ENCODE measurements at regions of chr19 and their contacts with region 1.

Region 1: DNA sequence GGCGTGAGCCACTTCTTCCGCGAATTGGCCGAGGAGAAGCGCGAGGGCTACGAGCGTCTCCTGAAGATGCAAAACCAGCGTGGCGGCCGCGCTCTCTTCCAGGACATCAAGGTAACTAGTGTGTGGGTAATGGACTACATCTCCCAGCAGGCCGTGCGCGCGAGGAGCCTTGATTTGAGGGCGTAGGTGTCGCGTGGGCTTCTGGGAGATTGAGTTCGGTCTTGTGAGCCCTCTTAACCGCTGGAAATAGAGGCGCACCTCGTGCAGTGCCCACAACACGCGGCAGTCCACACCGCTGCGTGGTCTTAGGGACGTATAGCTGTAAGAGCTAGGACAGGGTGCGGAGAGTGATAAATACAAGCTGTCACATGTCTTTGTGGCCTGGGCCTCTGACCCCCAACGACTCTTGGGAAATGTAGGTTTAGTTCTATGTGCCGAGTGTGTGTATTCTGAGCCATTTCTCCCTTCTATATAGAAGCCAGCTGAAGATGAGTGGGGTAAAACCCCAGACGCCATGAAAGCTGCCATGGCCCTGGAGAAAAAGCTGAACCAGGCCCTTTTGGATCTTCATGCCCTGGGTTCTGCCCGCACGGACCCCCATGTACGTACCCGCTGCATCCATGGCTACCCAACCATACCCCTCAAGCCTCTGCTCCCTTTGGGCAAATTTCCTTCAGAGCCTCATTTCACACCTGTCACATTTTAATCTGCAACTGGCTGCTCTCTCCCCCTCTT is 864 bp downstream of the FTL start:
- DNase-seq: peak; percentile 91
- ATAC-seq: peak; percentile 16
- H3K4me3 Mint-ChIP-seq: peak overlapping the region; percentile 99
- H3K27ac Mint-ChIP-seq: peak overlapping the region; percentile 93
- H3K4me1 Mint-ChIP-seq: peaks cover 37% of the 10 kb centered on the region
- H3K27me3 Mint-ChIP-seq: no peaks in the 10 kb centered on the region
- CTCF ChIP-seq: no peak

Region 2: DNA sequence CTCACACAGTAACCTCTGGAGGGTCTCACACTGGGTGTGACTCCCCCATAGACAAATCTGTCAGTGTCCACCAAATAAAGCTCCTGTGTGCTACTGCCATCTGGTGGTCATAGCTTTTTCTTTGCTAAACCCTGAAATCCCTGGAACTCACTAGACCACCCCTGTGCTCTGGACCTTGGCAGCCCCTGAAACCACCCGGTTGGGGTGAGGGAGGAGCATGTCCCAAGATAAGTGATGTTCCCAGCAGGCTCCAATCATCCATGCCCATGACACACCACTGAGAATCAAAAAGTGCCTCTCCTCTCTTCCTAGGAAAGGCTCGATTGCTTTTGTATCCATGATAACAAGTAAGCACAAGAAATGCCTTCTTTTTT is 123.2 kb before region 1 on chr19:
- CTCF ChIA-PET with region 1: interaction called, 19 read pairs
- POLR2A ChIA-PET with region 1: interaction called, 5 read pairs
- DNase-seq: peak; percentile 71
- ATAC-seq: peak; percentile 87
- H3K4me3 Mint-ChIP-seq: no peak overlapping the region
- H3K27ac Mint-ChIP-seq: no peak overlapping the region
- H3K4me1 Mint-ChIP-seq: peaks cover 6% of the 10 kb centered on the region
- H3K27me3 Mint-ChIP-seq: no peaks in the 10 kb centered on the region; the same call in 1 of the 2 replicates
- CTCF ChIP-seq: peak; percentile 70

Region 3: DNA sequence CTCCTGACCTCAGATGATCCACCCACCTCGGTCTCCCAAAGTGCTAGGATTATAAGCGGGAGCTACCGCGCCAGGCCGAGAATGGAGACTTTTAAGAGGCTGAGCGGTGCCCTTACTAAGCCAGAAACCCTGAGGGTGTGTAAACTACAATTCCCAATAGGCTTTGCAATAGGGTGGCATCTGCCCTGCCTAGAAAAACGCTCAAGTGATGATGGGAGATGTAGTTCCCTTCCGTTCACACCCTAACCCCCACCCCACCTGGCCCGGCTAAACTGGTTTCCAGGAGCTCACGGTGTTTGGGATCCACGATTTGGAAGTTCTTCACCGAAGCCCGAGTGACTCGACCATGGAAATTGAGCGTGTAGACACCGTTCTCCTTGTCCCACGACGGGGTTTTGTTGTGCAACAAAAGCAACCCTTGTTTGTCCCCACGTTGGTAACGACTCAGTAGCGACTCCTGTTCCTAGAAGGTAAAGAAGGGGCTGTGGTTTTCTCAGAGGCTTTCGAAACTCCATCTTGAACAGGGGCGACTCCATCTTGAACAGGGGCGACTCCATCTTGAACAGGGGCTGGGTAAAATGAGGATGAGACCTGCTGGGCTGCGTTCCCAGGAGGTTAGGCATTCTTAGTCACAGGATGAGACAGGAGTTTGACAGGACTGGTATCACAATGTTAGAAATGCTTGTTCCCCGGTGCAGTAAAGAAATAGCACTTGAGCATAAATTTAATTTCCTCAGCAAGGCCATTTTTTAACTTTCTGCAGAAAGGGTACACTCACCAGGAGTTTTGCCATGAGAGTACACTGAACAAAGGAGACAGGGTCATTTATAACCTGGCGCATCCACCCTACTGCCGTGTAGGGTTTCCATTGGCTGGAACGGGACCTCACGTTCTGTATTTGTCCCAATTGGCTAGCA is 84.0 kb before region 1 on chr19:
- CTCF ChIA-PET with region 1: interaction called, 21 read pairs
- POLR2A ChIA-PET with region 1: interaction called, 3 read pairs
- DNase-seq: peak; percentile 73
- ATAC-seq: peak; percentile 89
- H3K4me3 Mint-ChIP-seq: no peak overlapping the region
- H3K27ac Mint-ChIP-seq: no peak overlapping the region; the same call in 1 of the 2 replicates
- H3K4me1 Mint-ChIP-seq: peaks cover 19% of the 10 kb centered on the region
- H3K27me3 Mint-ChIP-seq: no peaks in the 10 kb centered on the region
- CTCF ChIP-seq: no peak

Region 4: DNA sequence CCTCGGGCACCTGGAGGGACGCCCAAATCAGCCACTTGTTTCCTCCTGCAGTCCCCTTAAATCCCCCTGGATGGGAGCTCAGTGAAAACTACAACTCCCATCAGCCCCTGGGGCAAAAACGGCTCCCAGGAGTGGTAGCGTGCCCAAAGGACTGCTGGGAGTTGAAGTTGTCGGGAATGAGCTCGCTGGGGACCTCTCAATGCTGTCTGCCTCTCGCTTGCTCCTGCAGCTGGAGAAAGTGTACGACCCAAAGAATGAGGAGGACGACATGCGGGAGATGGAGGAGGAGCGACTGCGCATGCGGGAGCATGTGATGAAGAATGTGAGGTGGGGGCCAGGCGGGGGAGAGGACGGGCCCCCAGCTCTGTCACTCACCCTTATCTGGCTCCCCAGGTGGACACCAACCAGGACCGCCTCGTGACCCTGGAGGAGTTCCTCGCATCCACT is 47.1 kb before region 1 on chr19:
- CTCF ChIA-PET with region 1: interaction called, 20 read pairs
- POLR2A ChIA-PET with region 1: no interaction called
- DNase-seq: peak; percentile 81
- ATAC-seq: peak; percentile 97
- H3K4me3 Mint-ChIP-seq: no peak overlapping the region
- H3K27ac Mint-ChIP-seq: 0 out of 2 replicates have a peak overlapping the region, but pooled peaks have one; percentile 76
- H3K4me1 Mint-ChIP-seq: no peaks in the 10 kb centered on the region
- H3K27me3 Mint-ChIP-seq: no peaks in the 10 kb centered on the region
- CTCF ChIP-seq: no peak

Region 5: GRCh38 chr19:48943081-48943480 is 22.9 kb before region 1 on chr19:
- CTCF ChIA-PET with region 1: interaction called, 10 read pairs
- POLR2A ChIA-PET with region 1: no interaction called
- DNase-seq: no peak
- ATAC-seq: no peak
- H3K4me3 Mint-ChIP-seq: no peak overlapping the region
- H3K27ac Mint-ChIP-seq: no peak overlapping the region
- H3K4me1 Mint-ChIP-seq: no peaks in the 10 kb centered on the region
- H3K27me3 Mint-ChIP-seq: peaks cover 6% of the 10 kb centered on the region
- CTCF ChIP-seq: no peak

Region 6: GRCh38 chr19:48975947-48976847 is 10.2 kb after region 1 on chr19:
- CTCF ChIA-PET with region 1: interaction called, 16 read pairs
- POLR2A ChIA-PET with region 1: no interaction called
- DNase-seq: peak; percentile 72
- ATAC-seq: peak; percentile 90
- H3K4me3 Mint-ChIP-seq: no peak overlapping the region
- H3K27ac Mint-ChIP-seq: peak overlapping the region; percentile 48; the same call in 1 of the 2 replicates
- H3K4me1 Mint-ChIP-seq: no peaks in the 10 kb centered on the region
- H3K27me3 Mint-ChIP-seq: no peaks in the 10 kb centered on the region
- CTCF ChIP-seq: no peak; the same call in 1 of the 2 replicates

Region 7: GRCh38 chr19:49387936-49388372 is 422.0 kb after region 1 on chr19 and contains the start of gene KASH5:
- CTCF ChIA-PET with region 1: no interaction called
- POLR2A ChIA-PET with region 1: no interaction called
- DNase-seq: no peak
- ATAC-seq: no peak
- H3K4me3 Mint-ChIP-seq: no peak within 1 kb of the TSS
- H3K27ac Mint-ChIP-seq: no peak within 1 kb of the TSS
- H3K4me1 Mint-ChIP-seq: peaks cover 6% of the 10 kb centered on the region
- H3K27me3 Mint-ChIP-seq: peaks cover 16% of the 10 kb centered on the region
- CTCF ChIP-seq: no peak
- total RNA-seq, gene KASH5: 0.14 to 0.42 TPM in 2 of 3 replicates, not detected in the other

Measured in WTC11 (cell line).